ENCODE measurements at regions of chr7 and their contacts with region 1.

Region 1: GRCh38 chr7:22854158-22855048 is 31.8 kb upstream of the TOMM7 start:
- DNase-seq: peak; percentile 72
- H3K4me3 ChIP-seq: peak overlapping the region; percentile 76 to 88 (median 86)
- H3K27ac ChIP-seq: peak overlapping the region; percentile 74
- H3K4me1 ChIP-seq: peaks cover 36% of the 10 kb centered on the region
- H3K27me3 ChIP-seq: no peaks in the 10 kb centered on the region
- CTCF ChIP-seq: peak; percentile 41 to 58
- POLR2A ChIP-seq: peak; percentile 84

Region 2: GRCh38 chr7:22688084-22688483 is 166.3 kb before region 1 on chr7:
- CTCF ChIA-PET with region 1: no interaction called
- POLR2A ChIA-PET with region 1: no interaction called
- dilution Hi-C with region 1: no loop called
- intact Hi-C with region 1: no loop called
- DNase-seq: no peak
- H3K4me3 ChIP-seq: no peak overlapping the region
- H3K27ac ChIP-seq: no peak overlapping the region
- H3K4me1 ChIP-seq: no peaks in the 10 kb centered on the region
- H3K27me3 ChIP-seq: no peaks in the 10 kb centered on the region
- CTCF ChIP-seq: no peak
- POLR2A ChIP-seq: no peak

Region 3: GRCh38 chr7:22822486-22823141 is 31.8 kb before region 1 on chr7 and contains the start of gene TOMM7:
- CTCF ChIA-PET with region 1: interaction called, 4 read pairs
- POLR2A ChIA-PET with region 1: no interaction called
- dilution Hi-C with region 1: no loop called
- intact Hi-C with region 1: loop called (anchors 1 kb)
- DNase-seq: peak; percentile 99
- H3K4me3 ChIP-seq: peak within 1 kb of the TSS; percentile 50 to 93 (median 75)
- H3K27ac ChIP-seq: peak within 1 kb of the TSS; percentile 60
- H3K4me1 ChIP-seq: peaks cover 5% of the 10 kb centered on the region
- H3K27me3 ChIP-seq: peaks cover 2 to 11% of the 10 kb centered on the region in 2 experiments
- CTCF ChIP-seq: no peak
- POLR2A ChIP-seq: peak; percentile 95
- total RNA-seq, gene TOMM7: 185 and 200 TPM in 2 replicates

Region 4: DNA sequence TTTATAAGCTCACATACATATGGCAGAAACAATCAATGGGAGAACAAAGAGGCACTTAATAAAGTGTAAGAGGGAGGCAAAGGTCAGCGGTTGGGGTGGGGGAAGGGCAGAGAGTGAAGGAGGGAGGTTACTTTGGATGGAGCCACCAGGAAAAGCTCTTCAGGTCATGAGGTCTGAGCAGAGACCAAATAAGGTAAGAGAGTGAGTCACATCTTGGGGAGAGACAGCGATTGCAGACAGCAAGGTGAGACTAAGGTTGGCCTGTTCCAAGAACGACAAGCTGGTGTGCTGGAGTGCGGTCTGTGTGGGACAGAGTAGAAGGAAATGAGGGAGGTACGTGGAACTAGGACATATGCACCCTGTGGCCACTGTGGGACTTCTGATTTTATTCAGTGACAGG is 42.5 kb after region 1 on chr7:
- CTCF ChIA-PET with region 1: no interaction called
- POLR2A ChIA-PET with region 1: no interaction called
- dilution Hi-C with region 1: no loop called
- intact Hi-C with region 1: no loop called
- DNase-seq: no peak
- H3K4me3 ChIP-seq: no peak overlapping the region
- H3K27ac ChIP-seq: no peak overlapping the region
- H3K4me1 ChIP-seq: no peaks in the 10 kb centered on the region
- H3K27me3 ChIP-seq: peaks cover 0 to 2% of the 10 kb centered on the region in 2 experiments
- CTCF ChIP-seq: no peak
- POLR2A ChIP-seq: no peak

Region 5: GRCh38 chr7:23161482-23161881 is 307.1 kb after region 1 on chr7:
- CTCF ChIA-PET with region 1: no interaction called
- POLR2A ChIA-PET with region 1: interaction called, 12 read pairs
- dilution Hi-C with region 1: no loop called
- intact Hi-C with region 1: no loop called
- DNase-seq: no peak
- H3K4me3 ChIP-seq: no peak overlapping the region
- H3K27ac ChIP-seq: no peak overlapping the region
- H3K4me1 ChIP-seq: no peaks in the 10 kb centered on the region
- H3K27me3 ChIP-seq: no peaks in the 10 kb centered on the region
- CTCF ChIP-seq: no peak
- POLR2A ChIP-seq: no peak

Region 6: DNA sequence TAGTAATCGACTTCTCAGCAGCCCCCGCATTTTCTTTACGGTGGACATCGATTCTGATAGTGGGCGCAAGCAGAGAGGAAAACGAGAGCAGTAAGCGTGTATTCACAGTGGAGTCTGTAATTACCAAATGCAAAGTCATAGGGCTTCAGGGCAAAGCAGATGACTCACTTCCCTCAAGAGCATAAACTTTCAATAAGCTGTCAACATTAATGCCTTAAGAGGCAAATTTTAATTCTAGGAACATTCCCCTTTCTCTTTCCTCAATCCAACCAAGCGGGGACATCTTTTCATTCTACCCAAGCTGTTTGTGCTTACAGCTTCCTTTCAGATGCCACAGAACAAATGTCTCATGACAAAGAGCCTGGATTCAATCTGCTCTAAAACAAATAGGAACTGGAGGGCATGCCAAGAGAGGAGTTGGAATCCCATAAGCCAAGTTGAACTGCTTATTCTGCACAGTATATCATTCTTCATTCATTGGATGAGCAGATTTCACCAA is 493.3 kb after region 1 on chr7:
- CTCF ChIA-PET with region 1: no interaction called
- POLR2A ChIA-PET with region 1: no interaction called
- dilution Hi-C with region 1: no loop called
- intact Hi-C with region 1: no loop called
- DNase-seq: peak; percentile 88
- H3K4me3 ChIP-seq: peak overlapping the region; percentile 27 to 67 (median 61)
- H3K27ac ChIP-seq: peak overlapping the region; percentile 88
- H3K4me1 ChIP-seq: peaks cover 80% of the 10 kb centered on the region
- H3K27me3 ChIP-seq: no peaks in the 10 kb centered on the region
- CTCF ChIP-seq: no peak
- POLR2A ChIP-seq: peak; percentile 44

Measured in endothelial cell of umbilical vein (primary cell).